Endothelial cell of umbilical vein (primary cell): ENCODE measurements at regions of chr12 and their contacts with region 1.

Region 1: GRCh38 chr12:117367011-117367638 is 5.7 kb upstream of the NOS1 start:
- DNase-seq: peak; percentile 79
- H3K4me3 ChIP-seq: no peak overlapping the region
- H3K27ac ChIP-seq: no peak overlapping the region
- H3K4me1 ChIP-seq: no peaks in the 10 kb centered on the region
- H3K27me3 ChIP-seq: peaks cover 14 to 17% of the 10 kb centered on the region in 2 experiments
- CTCF ChIP-seq: peak; percentile 82 to 87
- POLR2A ChIP-seq: no peak

Region 2: GRCh38 chr12:117236456-117237001 is 130.6 kb before region 1 on chr12:
- CTCF ChIA-PET with region 1: interaction called, 26 read pairs
- POLR2A ChIA-PET with region 1: no interaction called
- dilution Hi-C with region 1: no loop called
- intact Hi-C with region 1: loop called (anchors 2 kb)
- DNase-seq: peak; percentile 45
- H3K4me3 ChIP-seq: no peak overlapping the region
- H3K27ac ChIP-seq: no peak overlapping the region
- H3K4me1 ChIP-seq: no peaks in the 10 kb centered on the region
- H3K27me3 ChIP-seq: no peaks in the 10 kb centered on the region
- CTCF ChIP-seq: peak; percentile 78 to 91
- POLR2A ChIP-seq: no peak

Region 3: GRCh38 chr12:117294189-117294603 is 72.9 kb before region 1 on chr12:
- CTCF ChIA-PET with region 1: no interaction called
- POLR2A ChIA-PET with region 1: no interaction called
- dilution Hi-C with region 1: no loop called
- intact Hi-C with region 1: no loop called
- DNase-seq: no peak
- H3K4me3 ChIP-seq: no peak overlapping the region
- H3K27ac ChIP-seq: no peak overlapping the region
- H3K4me1 ChIP-seq: no peaks in the 10 kb centered on the region
- H3K27me3 ChIP-seq: no peaks in the 10 kb centered on the region
- CTCF ChIP-seq: no peak
- POLR2A ChIP-seq: no peak

Region 4: DNA sequence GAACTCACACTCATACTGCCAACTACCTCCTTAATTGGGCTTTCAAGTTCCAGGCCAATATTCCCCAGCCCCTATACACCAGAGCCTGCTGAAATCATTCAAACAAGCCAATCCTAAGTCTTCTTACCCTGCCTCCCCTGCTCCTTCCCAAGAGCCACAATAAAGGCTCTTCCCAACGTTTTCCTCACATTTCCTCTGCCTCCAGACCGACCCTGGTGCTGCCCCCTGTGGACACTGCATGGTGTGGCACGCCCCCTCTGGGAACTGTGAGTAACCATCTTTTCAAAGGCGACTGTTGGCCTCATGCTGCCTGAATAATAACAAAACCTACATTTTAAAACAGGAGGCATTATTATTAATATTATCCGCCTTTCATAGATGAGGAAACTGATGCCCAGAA is 105.9 kb after region 1 on chr12:
- CTCF ChIA-PET with region 1: no interaction called
- POLR2A ChIA-PET with region 1: no interaction called
- dilution Hi-C with region 1: no loop called
- intact Hi-C with region 1: loop called (anchors 1 kb)
- DNase-seq: peak; percentile 16
- H3K4me3 ChIP-seq: no peak overlapping the region
- H3K27ac ChIP-seq: no peak overlapping the region
- H3K4me1 ChIP-seq: no peaks in the 10 kb centered on the region
- H3K27me3 ChIP-seq: no peaks in the 10 kb centered on the region
- CTCF ChIP-seq: peak; percentile 56 to 60
- POLR2A ChIP-seq: no peak

Region 5: GRCh38 chr12:117587631-117588287 is 220.6 kb after region 1 on chr12:
- CTCF ChIA-PET with region 1: interaction called, 241 read pairs
- POLR2A ChIA-PET with region 1: no interaction called
- dilution Hi-C with region 1: no loop called
- intact Hi-C with region 1: loop called (anchors 1 kb)
- DNase-seq: peak; percentile 57
- H3K4me3 ChIP-seq: peak overlapping the region in 1 of 3 experiments; percentile 9
- H3K27ac ChIP-seq: no peak overlapping the region
- H3K4me1 ChIP-seq: no peaks in the 10 kb centered on the region
- H3K27me3 ChIP-seq: no peaks in the 10 kb centered on the region
- CTCF ChIP-seq: peak; percentile 83 to 96
- POLR2A ChIP-seq: no peak

Region 6: DNA sequence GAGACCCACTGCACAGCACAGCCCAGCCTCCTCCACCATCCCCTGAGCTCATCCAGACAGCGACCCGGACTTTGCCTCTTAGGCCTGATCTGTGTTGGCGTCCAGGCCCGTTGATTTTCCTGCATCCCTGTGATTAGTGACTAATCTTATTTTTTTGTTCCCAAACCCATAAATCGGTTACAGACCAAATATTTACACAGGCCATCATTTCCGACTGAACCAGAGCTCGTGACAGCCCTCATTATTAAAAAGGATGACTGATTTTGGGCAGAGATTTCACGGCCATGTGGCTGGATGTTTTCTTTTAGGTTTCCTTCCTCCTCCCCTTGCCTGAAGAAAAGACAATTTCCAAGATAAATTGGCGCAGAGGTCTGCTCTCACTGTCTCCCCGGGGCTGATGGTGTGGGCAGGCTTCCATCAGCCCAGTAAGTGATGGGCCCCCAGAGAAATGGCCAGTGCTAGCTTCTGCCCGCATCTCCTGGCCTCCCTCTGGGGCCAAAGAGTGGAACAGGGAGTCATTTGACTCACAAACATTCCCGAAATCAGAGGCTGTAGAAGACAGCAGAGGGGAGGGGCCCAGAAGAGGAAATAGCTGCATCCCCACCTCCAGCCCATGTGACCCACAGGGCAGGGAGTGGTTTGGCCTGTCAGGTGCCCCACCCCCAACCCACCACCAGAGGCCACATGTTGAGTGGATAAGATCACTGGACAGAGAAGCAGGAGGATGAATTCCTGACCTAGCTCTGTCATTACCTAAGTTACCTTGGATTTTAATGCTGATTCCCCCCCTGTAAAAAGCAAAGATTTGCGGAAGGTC is 318.2 kb after region 1 on chr12:
- CTCF ChIA-PET with region 1: interaction called, 12 read pairs
- POLR2A ChIA-PET with region 1: no interaction called
- dilution Hi-C with region 1: no loop called
- intact Hi-C with region 1: no loop called
- DNase-seq: peak; percentile 97
- H3K4me3 ChIP-seq: no peak overlapping the region
- H3K27ac ChIP-seq: peak overlapping the region; percentile 98
- H3K4me1 ChIP-seq: peaks cover 51% of the 10 kb centered on the region
- H3K27me3 ChIP-seq: no peaks in the 10 kb centered on the region
- CTCF ChIP-seq: no peak
- POLR2A ChIP-seq: no peak

Region 7: DNA sequence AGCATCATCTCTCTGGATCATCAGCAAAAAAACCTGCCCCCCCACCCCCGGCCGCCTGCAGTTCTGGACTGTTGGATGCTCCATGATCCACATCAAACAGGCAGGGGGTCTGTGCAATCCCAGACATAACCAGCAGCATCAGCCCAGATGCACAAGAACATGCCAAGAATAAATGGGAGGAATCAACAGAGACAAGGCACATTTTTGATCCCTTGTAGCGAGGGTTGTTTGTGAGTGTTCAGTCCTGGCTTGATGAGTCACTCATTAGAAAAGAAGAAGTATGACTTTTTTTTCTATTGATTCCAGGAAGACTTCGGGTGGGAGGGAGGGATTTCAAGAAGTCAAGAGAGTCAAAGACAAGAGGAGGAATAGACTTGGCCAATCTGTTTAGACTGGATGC is 357.4 kb after region 1 on chr12:
- CTCF ChIA-PET with region 1: no interaction called
- POLR2A ChIA-PET with region 1: no interaction called
- dilution Hi-C with region 1: no loop called
- intact Hi-C with region 1: no loop called
- DNase-seq: peak; percentile 6
- H3K4me3 ChIP-seq: no peak overlapping the region
- H3K27ac ChIP-seq: no peak overlapping the region
- H3K4me1 ChIP-seq: no peaks in the 10 kb centered on the region
- H3K27me3 ChIP-seq: no peaks in the 10 kb centered on the region
- CTCF ChIP-seq: no peak
- POLR2A ChIP-seq: no peak

Region 8: GRCh38 chr12:117857632-117858612 is 490.8 kb after region 1 on chr12:
- CTCF ChIA-PET with region 1: interaction called, 219 read pairs
- POLR2A ChIA-PET with region 1: no interaction called
- dilution Hi-C with region 1: no loop called
- intact Hi-C with region 1: loop called (anchors 1 kb)
- DNase-seq: peak; percentile 58
- H3K4me3 ChIP-seq: no peak overlapping the region
- H3K27ac ChIP-seq: no peak overlapping the region
- H3K4me1 ChIP-seq: no peaks in the 10 kb centered on the region
- H3K27me3 ChIP-seq: no peaks in the 10 kb centered on the region
- CTCF ChIP-seq: peak; percentile 61 to 72
- POLR2A ChIP-seq: no peak